ENCODE measurements at regions of chr18 and their contacts with region 1.

Region 1: GRCh38 chr18:58682429-58683069 is 11.3 kb downstream of the MALT1 start:
- DNase-seq: no peak
- ATAC-seq: no peak
- H3K4me3 ChIP-seq: no peak overlapping the region
- H3K27ac ChIP-seq: peak overlapping the region; percentile 20; the same call in 1 of the 2 replicates
- H3K4me1 ChIP-seq: peaks cover 4% of the 10 kb centered on the region
- H3K27me3 ChIP-seq: no peaks in the 10 kb centered on the region
- CTCF ChIP-seq: no peak
- EP300 ChIP-seq: no peak
- POLR2A ChIP-seq: no peak
- RAD21 ChIP-seq: no peak

Region 2: DNA sequence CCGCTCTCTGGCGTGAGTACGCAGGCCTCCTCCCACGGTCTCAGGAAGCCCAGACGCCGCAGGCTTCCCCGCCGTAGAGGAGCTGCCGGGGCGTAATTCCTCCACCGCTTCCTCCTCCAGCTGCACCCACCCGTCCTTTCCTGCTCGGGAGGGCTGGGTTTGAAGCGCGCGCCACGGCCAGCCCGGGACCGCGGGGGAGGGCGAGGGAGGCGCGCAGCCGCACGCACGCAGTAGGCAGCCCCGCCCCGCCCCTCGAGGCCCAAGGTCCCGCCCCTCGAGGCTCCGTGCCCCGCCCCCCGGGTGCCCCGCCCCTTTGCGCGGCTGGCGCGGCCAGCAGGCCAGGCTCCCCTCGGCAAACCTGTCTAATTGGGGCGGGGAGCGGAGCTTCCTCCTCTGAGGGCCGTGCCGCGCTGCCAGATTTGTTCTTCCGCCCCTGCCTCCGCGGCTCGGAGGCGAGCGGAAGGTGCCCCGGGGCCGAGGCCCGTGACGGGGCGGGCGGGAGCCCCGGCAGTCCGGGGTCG is 11.4 kb before region 1 on chr18 and contains the start of gene MALT1:
- CTCF ChIA-PET with region 1: interaction called, 5 read pairs
- POLR2A ChIA-PET with region 1: interaction called, 29 read pairs
- RAD21 ChIA-PET with region 1: interaction called, 3 read pairs
- SMC1A ChIA-PET with region 1: interaction called, 12 read pairs
- in situ Hi-C with region 1: no loop called
- intact Hi-C with region 1: no loop called
- DNase-seq: peak; percentile 75
- ATAC-seq: peak; percentile 78
- H3K4me3 ChIP-seq: peak within 1 kb of the TSS; percentile 95
- H3K27ac ChIP-seq: peak within 1 kb of the TSS; percentile 93
- H3K4me1 ChIP-seq: peaks cover 16% of the 10 kb centered on the region; the same call in 1 of the 2 replicates
- H3K27me3 ChIP-seq: no peaks in the 10 kb centered on the region
- CTCF ChIP-seq: no peak
- EP300 ChIP-seq: peak in 1 of 2 experiments; percentile 17; a peak in 1 of 4 replicates
- POLR2A ChIP-seq: peak; percentile 96
- RAD21 ChIP-seq: no peak; the same call in 1 of the 2 replicates
- polyA plus RNA-seq, gene MALT1: 17.6 to 32.5 TPM